ENCODE measurements at regions of chr16 and their contacts with region 1.

Region 1: DNA sequence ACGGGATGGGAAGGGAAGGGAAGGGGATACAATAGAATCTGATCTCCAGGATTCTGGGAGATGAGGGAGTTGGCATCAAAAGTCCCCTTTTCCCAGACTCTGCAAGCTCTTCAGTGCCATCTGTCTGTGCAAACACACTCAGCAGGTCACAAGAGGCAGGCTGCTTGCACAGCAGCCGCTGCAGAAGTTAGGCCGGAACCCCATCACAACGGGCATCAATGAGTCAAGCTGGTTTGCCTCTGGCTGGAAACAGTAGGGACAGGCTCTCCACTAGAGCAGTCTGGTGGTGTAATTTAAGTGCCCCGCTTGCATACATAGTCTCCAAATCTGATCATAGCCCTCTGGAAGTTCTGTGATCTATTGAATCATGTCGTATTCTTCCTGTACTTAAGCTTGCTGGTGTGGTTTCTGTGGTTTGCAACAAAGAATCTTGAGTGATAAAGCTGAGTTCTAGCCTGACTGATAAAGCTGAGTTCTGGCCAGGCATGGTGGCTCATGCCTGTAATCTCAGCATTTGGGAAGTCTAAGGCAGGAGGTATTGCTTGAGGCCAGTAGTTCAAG is 33.7 kb upstream of the KDM8 start:
- DNase-seq: peak; percentile 92
- H3K4me3 Mint-ChIP-seq: no peak overlapping the region
- H3K27ac Mint-ChIP-seq: peak overlapping the region; percentile 87
- H3K4me1 Mint-ChIP-seq: peaks cover 55% of the 10 kb centered on the region
- H3K27me3 Mint-ChIP-seq: no peaks in the 10 kb centered on the region

Region 2: DNA sequence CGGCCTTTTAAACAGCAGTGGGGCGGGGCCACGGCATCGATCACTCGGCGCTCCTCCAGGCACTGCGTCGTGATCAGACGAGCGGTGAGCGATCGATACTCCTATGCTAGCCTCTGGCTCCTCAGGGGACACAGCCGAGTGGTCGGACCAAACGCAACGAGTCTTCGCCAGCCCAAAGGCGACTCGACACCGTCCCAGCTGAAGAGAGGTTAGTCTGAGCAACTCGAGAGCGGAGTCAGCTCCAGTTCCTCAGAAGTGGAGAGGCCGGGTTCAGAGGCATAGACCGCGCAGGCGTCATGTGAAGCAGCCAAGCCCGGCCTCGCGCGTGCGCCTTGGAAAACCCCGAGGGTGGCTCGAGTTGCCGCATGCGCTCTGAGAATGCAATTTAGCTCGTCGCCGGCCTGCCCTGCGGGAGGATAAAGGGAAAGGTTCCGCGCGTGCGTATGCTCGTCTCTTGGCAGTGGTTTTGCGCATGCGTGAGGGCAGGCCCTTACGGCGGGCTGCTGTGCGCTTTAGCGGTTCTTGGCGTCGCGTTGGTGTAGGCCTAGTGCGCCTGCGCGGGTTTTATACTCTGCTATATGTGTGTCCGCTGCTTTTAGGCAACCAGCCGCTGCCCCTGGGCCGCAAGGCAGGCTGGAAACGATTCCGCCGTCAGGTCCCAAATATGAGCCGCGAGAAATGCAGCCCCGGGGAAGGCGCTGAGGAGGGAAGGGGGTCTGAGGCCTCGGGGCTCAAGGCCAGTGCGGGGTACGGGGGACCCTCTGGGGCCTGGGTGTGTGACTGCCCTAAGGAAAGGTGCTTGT is 34.0 kb after region 1 on chr16 and contains the start of gene KDM8:
- CTCF ChIA-PET with region 1: interaction called, 8 read pairs
- intact Hi-C with region 1: loop called (anchors 1 kb)
- DNase-seq: peak; percentile 100
- H3K4me3 Mint-ChIP-seq: peak within 1 kb of the TSS; percentile 99
- H3K27ac Mint-ChIP-seq: peak within 1 kb of the TSS; percentile 100
- H3K4me1 Mint-ChIP-seq: peaks cover 50% of the 10 kb centered on the region
- H3K27me3 Mint-ChIP-seq: no peaks in the 10 kb centered on the region
- total RNA-seq, gene KDM8: 11.3 to 13.9 TPM

Region 3: DNA sequence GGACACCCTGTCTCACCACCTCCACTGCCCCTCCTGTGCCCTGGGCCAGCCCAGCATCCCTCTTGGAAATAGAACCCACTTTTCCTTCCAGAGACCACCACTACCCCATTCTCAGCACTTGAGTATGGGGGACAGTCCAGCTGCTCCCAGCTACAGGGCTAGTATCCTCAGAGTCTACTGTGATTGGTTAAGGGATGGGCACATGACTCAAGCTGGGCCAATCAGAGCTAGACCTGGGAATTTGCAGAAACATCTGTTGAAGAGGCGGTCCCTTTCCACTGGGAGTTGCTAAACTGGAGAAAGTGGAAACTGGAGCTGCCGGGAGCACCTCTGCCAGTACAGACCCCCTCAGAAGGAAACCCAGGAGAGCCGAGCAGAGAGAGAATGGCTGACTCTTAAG is 737.3 kb after region 1 on chr16:
- CTCF ChIA-PET with region 1: no interaction called
- intact Hi-C with region 1: no loop called
- DNase-seq: no peak
- H3K4me3 Mint-ChIP-seq: no peak overlapping the region
- H3K27ac Mint-ChIP-seq: no peak overlapping the region
- H3K4me1 Mint-ChIP-seq: no peaks in the 10 kb centered on the region
- H3K27me3 Mint-ChIP-seq: peaks cover 4% of the 10 kb centered on the region

Measured in activated naive CD4-positive, alpha-beta T cell treated with anti-CD3 and anti-CD28 coated beads for 36 hours (primary cell).